K562 (cell line): ENCODE measurements at regions of chr9 and their contacts with region 1.

Region 1: DNA sequence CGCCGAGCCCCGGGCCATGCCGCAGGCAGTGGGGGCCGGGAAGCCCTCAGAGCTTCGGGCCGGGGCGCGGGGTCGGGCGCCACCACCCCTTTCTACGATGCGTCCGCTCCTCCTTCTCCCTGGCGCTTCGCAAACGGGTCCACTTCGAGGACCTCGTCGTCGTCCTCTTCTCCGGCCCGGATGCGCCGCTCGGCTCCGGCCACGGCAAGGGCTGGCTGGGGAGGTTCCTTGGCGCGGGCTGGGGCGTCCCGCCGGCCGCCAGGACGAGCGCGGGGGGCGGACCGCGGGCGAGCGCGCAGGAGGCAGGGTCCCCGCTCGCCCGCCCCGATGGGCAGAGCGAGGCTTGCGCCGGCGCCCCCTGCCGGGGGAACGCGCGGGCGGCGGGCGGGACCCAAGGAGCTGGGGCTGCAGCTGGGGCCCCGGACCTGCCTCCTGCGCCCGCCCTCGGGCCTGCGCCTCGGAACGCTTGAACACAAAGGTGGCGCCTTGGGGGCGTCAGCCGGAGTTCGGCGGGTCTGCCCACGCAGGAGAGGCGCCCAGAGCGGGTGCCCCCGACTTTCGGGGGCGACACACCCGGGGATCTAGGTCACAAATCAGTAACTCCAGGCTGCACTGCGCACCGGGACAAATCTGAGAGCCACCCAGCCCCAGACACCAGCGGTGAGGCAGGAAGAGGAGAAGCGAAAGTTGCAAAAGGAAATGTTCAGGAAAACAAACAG is at the start of gene ROR2:
- DNase-seq: peak; percentile 88 to 91 (median 90)
- ATAC-seq: peak; percentile 77
- H3K4me3 ChIP-seq: peak within 1 kb of the TSS; percentile 80
- H3K27ac ChIP-seq: peak within 1 kb of the TSS; percentile 79
- H3K4me1 ChIP-seq: peaks cover 16 to 28% of the 10 kb centered on the region in 2 experiments; a peak in 4 of 5 replicates
- H3K27me3 ChIP-seq: no peaks in the 10 kb centered on the region
- CTCF ChIP-seq: peak; percentile 54 to 84 (median 78)
- EP300 ChIP-seq: no peak
- POLR2A ChIP-seq: peak; percentile 47; the same call in 1 of the 2 replicates
- RAD21 ChIP-seq: peak; percentile 72 to 87
- polyA plus RNA-seq, gene ROR2: 5.6 to 6.0 TPM

Region 2: DNA sequence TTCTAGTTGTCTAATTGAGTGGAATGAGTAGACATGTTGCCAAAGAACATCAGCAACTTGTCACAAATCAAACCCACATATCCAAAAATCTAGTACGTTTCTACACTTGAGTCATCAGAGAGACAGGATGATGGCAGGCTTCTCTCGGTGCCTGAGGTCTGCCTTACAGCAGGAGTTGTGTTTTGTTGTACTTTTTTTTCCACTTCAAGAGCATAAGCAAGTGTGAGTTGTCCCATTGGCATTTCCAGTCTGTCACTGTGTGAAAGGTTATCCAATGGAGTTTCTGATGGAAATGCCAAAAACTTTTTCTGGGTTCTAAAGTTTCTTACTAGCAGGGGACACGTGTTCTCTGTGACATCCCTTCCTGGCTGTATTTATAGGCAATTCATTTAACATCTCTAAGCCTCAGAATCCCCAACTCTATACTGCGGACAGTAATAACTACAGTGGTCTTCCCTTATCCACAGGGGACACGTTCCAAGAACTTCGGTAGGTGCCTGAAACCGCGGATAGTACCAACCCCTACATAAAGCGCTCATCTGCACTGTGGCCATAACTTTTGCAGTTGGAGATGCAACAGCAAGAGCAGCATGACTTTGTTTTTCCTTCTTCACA is 902.0 kb before region 1 on chr9:
- CTCF ChIA-PET with region 1: no interaction called
- POLR2A ChIA-PET with region 1: no interaction called
- in situ Hi-C with region 1: no loop called
- intact Hi-C with region 1: no loop called
- DNase-seq: no peak
- ATAC-seq: no peak
- H3K4me3 ChIP-seq: no peak overlapping the region
- H3K27ac ChIP-seq: no peak overlapping the region
- H3K4me1 ChIP-seq: no peaks in the 10 kb centered on the region
- H3K27me3 ChIP-seq: peaks cover 0 to 19% of the 10 kb centered on the region in 2 experiments; a peak in 4 of 5 replicates
- CTCF ChIP-seq: no peak
- EP300 ChIP-seq: no peak
- POLR2A ChIP-seq: no peak
- RAD21 ChIP-seq: no peak

Region 3: GRCh38 chr9:91734371-91734981 is 215.6 kb before region 1 on chr9:
- CTCF ChIA-PET with region 1: no interaction called
- POLR2A ChIA-PET with region 1: no interaction called
- in situ Hi-C with region 1: no loop called
- intact Hi-C with region 1: no loop called
- DNase-seq: peak; percentile 73 to 84 (median 80)
- ATAC-seq: peak; percentile 92
- H3K4me3 ChIP-seq: no peak overlapping the region
- H3K27ac ChIP-seq: no peak overlapping the region
- H3K4me1 ChIP-seq: peaks cover 0 to 2% of the 10 kb centered on the region in 2 experiments; a peak in 2 of 5 replicates
- H3K27me3 ChIP-seq: no peaks in the 10 kb centered on the region
- CTCF ChIP-seq: peak; percentile 75 to 96 (median 83)
- EP300 ChIP-seq: no peak
- POLR2A ChIP-seq: no peak
- RAD21 ChIP-seq: peak; percentile 42 to 71; a peak in 3 of 4 replicates

Region 4: GRCh38 chr9:91766315-91767069 is 183.6 kb before region 1 on chr9:
- CTCF ChIA-PET with region 1: no interaction called
- POLR2A ChIA-PET with region 1: interaction called, 4 read pairs
- in situ Hi-C with region 1: loop called (anchors 10 kb)
- intact Hi-C with region 1: no loop called
- DNase-seq: no peak
- ATAC-seq: no peak
- H3K4me3 ChIP-seq: no peak overlapping the region
- H3K27ac ChIP-seq: no peak overlapping the region
- H3K4me1 ChIP-seq: no peaks in the 10 kb centered on the region
- H3K27me3 ChIP-seq: no peaks in the 10 kb centered on the region
- CTCF ChIP-seq: no peak
- EP300 ChIP-seq: no peak
- POLR2A ChIP-seq: no peak
- RAD21 ChIP-seq: no peak

Region 5: DNA sequence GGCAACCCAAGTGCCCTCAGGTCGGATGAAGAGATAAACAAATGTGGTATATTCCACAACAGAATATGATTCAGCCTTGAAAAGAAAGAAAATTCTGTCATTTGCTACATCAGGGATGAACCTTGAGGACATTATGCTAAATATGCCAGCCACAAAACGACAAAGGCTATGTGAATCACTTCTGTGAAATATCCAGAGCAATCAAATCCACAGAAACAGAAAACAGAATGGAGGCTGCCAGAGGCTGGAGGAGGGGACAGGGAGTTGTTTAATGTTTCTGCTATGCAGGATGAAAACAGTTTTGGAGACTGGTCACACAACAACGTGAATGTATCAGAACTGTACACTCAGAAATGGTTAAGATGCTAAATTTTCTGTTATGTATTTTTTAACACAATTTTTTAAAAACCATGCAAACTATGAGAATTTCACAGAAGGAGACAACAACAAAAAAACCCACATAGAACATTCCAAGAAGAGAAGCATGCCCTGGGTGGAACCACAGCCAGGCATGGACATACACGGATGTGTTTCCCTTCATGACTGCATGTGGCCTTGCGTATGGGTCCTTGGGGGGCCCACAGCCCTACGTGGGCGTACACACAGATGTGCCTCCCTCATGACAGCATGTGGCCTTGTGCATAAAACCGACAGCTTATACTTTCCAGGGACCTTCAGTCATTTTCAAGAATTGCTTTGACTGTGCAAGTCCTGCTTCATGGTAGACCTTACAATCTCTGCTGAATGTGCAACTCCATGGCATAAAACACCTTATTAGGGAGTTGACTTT is 146.8 kb before region 1 on chr9:
- CTCF ChIA-PET with region 1: no interaction called
- POLR2A ChIA-PET with region 1: interaction called, 3 read pairs
- in situ Hi-C with region 1: no loop called
- intact Hi-C with region 1: loop called (anchors 5 kb)
- DNase-seq: no peak
- ATAC-seq: no peak
- H3K4me3 ChIP-seq: no peak overlapping the region
- H3K27ac ChIP-seq: no peak overlapping the region
- H3K4me1 ChIP-seq: peaks cover 37 to 38% of the 10 kb centered on the region in 2 experiments
- H3K27me3 ChIP-seq: no peaks in the 10 kb centered on the region
- CTCF ChIP-seq: no peak
- EP300 ChIP-seq: no peak
- POLR2A ChIP-seq: no peak
- RAD21 ChIP-seq: no peak

Region 6: DNA sequence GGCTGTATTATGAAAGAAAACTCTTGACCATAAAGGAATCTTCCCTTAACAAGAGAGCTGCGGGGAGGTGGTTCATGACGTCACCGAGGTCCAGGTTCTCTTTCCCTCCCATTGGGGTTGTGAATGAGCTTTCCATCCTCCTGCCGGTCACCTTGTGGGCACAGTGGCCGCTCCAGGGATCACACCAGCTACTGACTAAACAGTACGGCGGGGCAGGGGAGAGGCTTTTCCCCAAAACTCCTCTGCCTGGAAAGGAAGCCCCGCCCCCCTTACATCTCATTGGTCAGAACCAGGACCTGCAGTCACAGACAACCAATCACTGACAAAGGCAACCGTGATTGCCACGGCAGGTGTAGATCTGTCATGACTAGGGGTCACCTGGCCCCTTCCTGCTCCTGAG is 35.7 kb before region 1 on chr9:
- CTCF ChIA-PET with region 1: no interaction called
- POLR2A ChIA-PET with region 1: interaction called, 3 read pairs
- in situ Hi-C with region 1: loop called (anchors 5 kb)
- intact Hi-C with region 1: no loop called
- DNase-seq: peak in 3 of 4 experiments; percentile 64 to 76 (median 66)
- ATAC-seq: peak; percentile 72
- H3K4me3 ChIP-seq: no peak overlapping the region
- H3K27ac ChIP-seq: no peak overlapping the region
- H3K4me1 ChIP-seq: peaks cover under 1 to 3% of the 10 kb centered on the region in 2 experiments; a peak in 2 of 5 replicates
- H3K27me3 ChIP-seq: no peaks in the 10 kb centered on the region
- CTCF ChIP-seq: no peak
- EP300 ChIP-seq: no peak
- POLR2A ChIP-seq: no peak
- RAD21 ChIP-seq: no peak

Region 7: DNA sequence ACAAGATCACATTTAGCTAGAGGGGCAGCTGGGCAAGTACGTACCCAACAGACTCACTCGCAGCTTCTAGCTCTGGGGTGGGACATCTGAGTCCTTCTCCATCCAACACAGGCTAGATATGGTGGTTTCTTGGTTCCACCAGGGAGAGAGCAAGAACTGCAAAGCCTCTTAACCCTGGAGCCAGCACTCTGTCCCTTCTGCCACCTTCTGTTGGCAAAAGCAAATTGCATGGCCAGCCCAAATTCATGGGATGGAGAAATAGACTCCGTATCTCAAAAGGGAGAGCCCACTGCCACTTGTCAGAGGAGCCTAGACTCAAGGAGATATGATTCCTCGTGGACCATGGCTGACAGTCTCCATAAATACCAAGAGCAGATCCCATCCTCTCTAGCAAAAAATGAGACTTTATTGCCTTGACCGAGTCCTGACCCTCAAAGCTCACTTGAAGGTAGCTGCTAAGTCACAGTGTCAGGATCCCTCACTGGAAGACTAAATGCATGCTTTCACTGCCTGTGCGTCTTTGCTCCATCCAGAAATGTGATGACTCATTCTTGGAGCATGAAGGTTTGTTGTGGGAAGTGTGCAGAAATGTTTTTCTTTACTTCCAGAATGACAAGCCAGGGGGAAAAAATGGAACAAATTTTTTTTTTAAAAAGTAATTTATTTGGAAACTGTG is 28.8 kb after region 1 on chr9:
- CTCF ChIA-PET with region 1: no interaction called
- POLR2A ChIA-PET with region 1: no interaction called
- in situ Hi-C with region 1: no loop called
- intact Hi-C with region 1: loop called (anchors 1 kb)
- DNase-seq: peak in 3 of 4 experiments; percentile 22 to 61 (median 40)
- ATAC-seq: peak; percentile 92
- H3K4me3 ChIP-seq: no peak overlapping the region
- H3K27ac ChIP-seq: no peak overlapping the region
- H3K4me1 ChIP-seq: peaks cover 0 to 2% of the 10 kb centered on the region in 2 experiments; a peak in 1 of 5 replicates
- H3K27me3 ChIP-seq: peaks cover 3 to 5% of the 10 kb centered on the region in 2 experiments; a peak in 3 of 5 replicates
- CTCF ChIP-seq: peak; percentile 61 to 83 (median 75)
- EP300 ChIP-seq: no peak
- POLR2A ChIP-seq: no peak
- RAD21 ChIP-seq: peak; percentile 63 to 84

Region 8: GRCh38 chr9:92325269-92325990 is 375.3 kb after region 1 on chr9 and contains the starts of genes CENPP and NOL8:
- CTCF ChIA-PET with region 1: no interaction called
- POLR2A ChIA-PET with region 1: no interaction called
- in situ Hi-C with region 1: no loop called
- intact Hi-C with region 1: no loop called
- DNase-seq: peak; percentile 84 to 92 (median 88)
- ATAC-seq: peak; percentile 94
- H3K4me3 ChIP-seq: peak within 1 kb of the TSS; percentile 57
- H3K27ac ChIP-seq: peak within 1 kb of the TSS; percentile 98
- H3K4me1 ChIP-seq: peaks cover 5 to 16% of the 10 kb centered on the region in 2 experiments; a peak in 3 of 5 replicates
- H3K27me3 ChIP-seq: no peaks in the 10 kb centered on the region
- CTCF ChIP-seq: no peak
- EP300 ChIP-seq: 0 out of 2 replicates have a peak, but pooled peaks have one; percentile 6
- POLR2A ChIP-seq: peak; percentile 89
- RAD21 ChIP-seq: no peak
- polyA plus RNA-seq, gene CENPP: 8.0 to 10.2 TPM
- polyA plus RNA-seq, gene NOL8: 83.4 to 91.5 TPM